ENCODE measurements at regions of chr5 and their contacts with region 1.

Region 1: DNA sequence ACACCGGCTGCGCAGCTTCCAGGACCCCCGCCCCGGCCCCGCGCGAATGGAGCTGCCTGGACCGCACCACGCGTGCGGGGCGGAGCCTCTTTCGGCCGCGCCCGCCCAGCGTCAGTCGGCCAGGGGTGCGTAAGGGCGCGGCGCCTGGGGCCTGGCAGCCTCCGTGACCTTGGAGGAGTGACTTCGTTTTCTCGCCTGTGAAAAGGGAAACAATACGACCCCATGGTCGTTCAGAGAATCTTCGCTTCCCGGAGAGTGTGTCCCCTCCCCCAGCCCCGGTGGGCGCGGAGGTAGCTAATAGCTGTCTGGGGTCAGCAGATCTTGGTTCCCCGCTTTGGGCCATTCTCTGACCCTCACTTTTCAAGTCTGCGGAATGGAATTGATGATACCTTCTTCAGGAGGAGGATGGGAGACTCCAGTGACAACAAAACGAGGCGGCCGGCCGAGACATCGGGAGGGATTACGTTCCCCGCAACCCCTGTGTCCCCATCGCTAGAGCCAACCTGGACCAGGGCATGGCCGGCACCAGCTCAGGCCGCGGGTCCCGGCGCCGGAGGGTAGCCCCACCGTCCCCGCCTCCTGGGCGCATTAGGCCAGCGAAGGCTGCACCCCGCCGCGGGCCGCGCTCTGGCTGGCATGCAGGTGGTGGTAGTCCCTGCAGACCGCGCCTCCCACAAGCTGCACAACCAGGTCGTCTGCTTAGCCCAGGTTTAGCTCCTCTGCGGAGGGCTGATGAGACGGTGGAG is 5.5 kb upstream of the CDHR2 start:
- DNase-seq: peak; percentile 75
- H3K4me3 Mint-ChIP-seq: peak overlapping the region; percentile 82
- H3K27ac Mint-ChIP-seq: peak overlapping the region; percentile 50
- H3K4me1 Mint-ChIP-seq: peaks cover 30% of the 10 kb centered on the region
- H3K27me3 Mint-ChIP-seq: no peaks in the 10 kb centered on the region
- CTCF ChIP-seq: no peak

Region 2: GRCh38 chr5:176388444-176389134 is 155.0 kb before region 1 on chr5 and contains the starts of genes HIGD2A and NOP16:
- CTCF ChIA-PET with region 1: no interaction called
- POLR2A ChIA-PET with region 1: interaction called, 51 read pairs
- intact Hi-C with region 1: no loop called
- DNase-seq: peak; percentile 100
- H3K4me3 Mint-ChIP-seq: peak within 1 kb of the TSS; percentile 98
- H3K27ac Mint-ChIP-seq: peak within 1 kb of the TSS; percentile 99
- H3K4me1 Mint-ChIP-seq: peaks cover 22% of the 10 kb centered on the region
- H3K27me3 Mint-ChIP-seq: no peaks in the 10 kb centered on the region
- CTCF ChIP-seq: no peak
- total RNA-seq, gene HIGD2A: 167 and 196 TPM in 2 replicates
- total RNA-seq, gene NOP16: 90.9 and 134 TPM in 2 replicates

Region 3: GRCh38 chr5:176492431-176492830 is 51.2 kb before region 1 on chr5:
- CTCF ChIA-PET with region 1: interaction called, 5 read pairs
- POLR2A ChIA-PET with region 1: interaction called, 154 read pairs
- intact Hi-C with region 1: no loop called
- DNase-seq: peak; percentile 86
- H3K4me3 Mint-ChIP-seq: peak overlapping the region; percentile 17
- H3K27ac Mint-ChIP-seq: peak overlapping the region; percentile 63
- H3K4me1 Mint-ChIP-seq: peaks cover 30% of the 10 kb centered on the region
- H3K27me3 Mint-ChIP-seq: no peaks in the 10 kb centered on the region
- CTCF ChIP-seq: no peak

Region 4: GRCh38 chr5:176508603-176509002 is 35.0 kb before region 1 on chr5:
- CTCF ChIA-PET with region 1: no interaction called
- POLR2A ChIA-PET with region 1: no interaction called
- intact Hi-C with region 1: no loop called
- DNase-seq: no peak
- H3K4me3 Mint-ChIP-seq: no peak overlapping the region
- H3K27ac Mint-ChIP-seq: no peak overlapping the region
- H3K4me1 Mint-ChIP-seq: no peaks in the 10 kb centered on the region
- H3K27me3 Mint-ChIP-seq: no peaks in the 10 kb centered on the region
- CTCF ChIP-seq: no peak

Region 5: GRCh38 chr5:176559683-176560082 is 16.1 kb after region 1 on chr5:
- CTCF ChIA-PET with region 1: interaction called, 11 read pairs
- POLR2A ChIA-PET with region 1: interaction called, 38 read pairs
- intact Hi-C with region 1: no loop called
- DNase-seq: peak; percentile 57
- H3K4me3 Mint-ChIP-seq: no peak overlapping the region
- H3K27ac Mint-ChIP-seq: no peak overlapping the region
- H3K4me1 Mint-ChIP-seq: peaks cover 7% of the 10 kb centered on the region
- H3K27me3 Mint-ChIP-seq: no peaks in the 10 kb centered on the region
- CTCF ChIP-seq: peak; percentile 19

Region 6: DNA sequence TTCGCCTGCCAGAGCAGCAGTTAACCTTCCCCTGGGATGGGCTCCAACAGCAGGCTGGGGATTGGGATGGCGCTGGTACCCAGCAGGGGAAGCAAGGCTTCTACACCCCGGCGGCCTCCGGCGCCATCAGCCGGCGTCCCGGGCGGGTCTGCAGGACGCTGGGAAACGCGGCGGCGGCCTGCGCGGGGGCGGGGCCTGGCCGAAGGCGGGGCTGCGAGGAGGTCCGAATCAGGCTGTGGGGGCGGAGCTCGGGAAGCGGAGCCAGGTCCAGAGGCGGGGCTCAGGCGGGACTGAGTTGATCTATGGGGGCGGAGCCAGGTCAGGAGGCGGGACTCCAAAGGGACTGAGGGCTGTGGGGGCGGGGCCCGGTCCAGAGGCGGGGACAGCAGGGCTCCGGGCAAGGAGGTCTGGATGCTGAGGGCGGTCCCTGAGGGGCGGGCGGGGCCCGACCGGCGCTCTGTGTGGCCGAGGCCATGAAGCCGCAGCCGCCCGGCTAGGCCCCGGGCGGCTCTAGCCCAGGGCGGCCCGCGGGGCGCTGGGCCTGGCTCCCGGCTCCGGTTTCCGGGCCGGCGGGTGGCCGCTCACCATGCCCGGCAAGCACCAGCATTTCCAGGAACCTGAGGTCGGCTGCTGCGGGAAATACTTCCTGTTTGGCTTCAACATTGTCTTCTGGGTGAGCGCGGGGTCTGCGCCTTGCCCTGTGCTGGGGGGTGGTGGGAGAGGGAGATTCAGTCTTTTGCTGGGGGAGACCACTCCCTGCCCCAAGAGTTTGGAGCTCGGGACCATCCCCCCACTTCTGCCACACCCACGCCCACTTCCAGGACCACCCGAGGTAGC is 103.6 kb after region 1 on chr5 and contains the start of gene TSPAN17:
- CTCF ChIA-PET with region 1: interaction called, 4 read pairs
- POLR2A ChIA-PET with region 1: interaction called, 13 read pairs
- intact Hi-C with region 1: no loop called
- DNase-seq: peak; percentile 100
- H3K4me3 Mint-ChIP-seq: peak within 1 kb of the TSS; percentile 80
- H3K27ac Mint-ChIP-seq: peak within 1 kb of the TSS; percentile 76
- H3K4me1 Mint-ChIP-seq: peaks cover 21% of the 10 kb centered on the region
- H3K27me3 Mint-ChIP-seq: no peaks in the 10 kb centered on the region
- CTCF ChIP-seq: peak; percentile 49
- total RNA-seq, gene TSPAN17: 36.7 and 47.5 TPM in 2 replicates